Activated T-helper 1 cell treated with anti-CD3 and anti-CD28 coated beads, Interleukin-12 subunit alpha, Interleukin-12 subunit beta, Interleukin-2, Interleukin-4 antibody, amounts not matched to agents 30 ng/mL and 10 ng/mL and 1 ng/mL, durations not matched to agents 14 hours and 24 hours and 36 hours (primary cell): ENCODE measurements at regions of chr7 and their contacts with region 1.

Region 1: GRCh38 chr7:100015232-100016209 is at the start of gene ZKSCAN1:
- DNase-seq: peak; percentile 82
- H3K4me3 Mint-ChIP-seq: peak within 1 kb of the TSS; percentile 98
- H3K27ac Mint-ChIP-seq: peak within 1 kb of the TSS; percentile 92
- H3K4me1 Mint-ChIP-seq: peaks cover 55% of the 10 kb centered on the region
- H3K27me3 Mint-ChIP-seq: no peaks in the 10 kb centered on the region
- total RNA-seq, gene ZKSCAN1: 62.5 and 63.1 TPM in 2 replicates

Region 2: GRCh38 chr7:99438573-99439480 is 576.7 kb before region 1 on chr7 and contains the starts of genes CPSF4 and PTCD1:
- intact Hi-C with region 1: loop called (anchors 1 kb)
- DNase-seq: peak; percentile 91
- H3K4me3 Mint-ChIP-seq: peak within 1 kb of the TSS; percentile 98
- H3K27ac Mint-ChIP-seq: peak within 1 kb of the TSS; percentile 88
- H3K4me1 Mint-ChIP-seq: peaks cover 28% of the 10 kb centered on the region
- H3K27me3 Mint-ChIP-seq: no peaks in the 10 kb centered on the region
- total RNA-seq, gene CPSF4: 92.3 and 93.2 TPM in 2 replicates
- total RNA-seq, gene PTCD1: 13.7 and 16.0 TPM in 2 replicates

Region 3: GRCh38 chr7:99558306-99559174 is 457.0 kb before region 1 on chr7 and contains the start of gene ZNF655:
- intact Hi-C with region 1: loop called (anchors 5 kb)
- DNase-seq: peak; percentile 89
- H3K4me3 Mint-ChIP-seq: peak within 1 kb of the TSS; percentile 100
- H3K27ac Mint-ChIP-seq: peak within 1 kb of the TSS; percentile 98
- H3K4me1 Mint-ChIP-seq: peaks cover 48% of the 10 kb centered on the region
- H3K27me3 Mint-ChIP-seq: no peaks in the 10 kb centered on the region
- total RNA-seq, gene ZNF655: 77.9 and 79.9 TPM in 2 replicates

Region 4: GRCh38 chr7:99997545-99998137 is 17.9 kb before region 1 on chr7:
- intact Hi-C with region 1: loop called (anchors 1 kb)
- DNase-seq: peak; percentile 69
- H3K4me3 Mint-ChIP-seq: peak overlapping the region; percentile 77
- H3K27ac Mint-ChIP-seq: peak overlapping the region; percentile 89
- H3K4me1 Mint-ChIP-seq: peaks cover 10% of the 10 kb centered on the region
- H3K27me3 Mint-ChIP-seq: peaks cover 5% of the 10 kb centered on the region

Region 5: DNA sequence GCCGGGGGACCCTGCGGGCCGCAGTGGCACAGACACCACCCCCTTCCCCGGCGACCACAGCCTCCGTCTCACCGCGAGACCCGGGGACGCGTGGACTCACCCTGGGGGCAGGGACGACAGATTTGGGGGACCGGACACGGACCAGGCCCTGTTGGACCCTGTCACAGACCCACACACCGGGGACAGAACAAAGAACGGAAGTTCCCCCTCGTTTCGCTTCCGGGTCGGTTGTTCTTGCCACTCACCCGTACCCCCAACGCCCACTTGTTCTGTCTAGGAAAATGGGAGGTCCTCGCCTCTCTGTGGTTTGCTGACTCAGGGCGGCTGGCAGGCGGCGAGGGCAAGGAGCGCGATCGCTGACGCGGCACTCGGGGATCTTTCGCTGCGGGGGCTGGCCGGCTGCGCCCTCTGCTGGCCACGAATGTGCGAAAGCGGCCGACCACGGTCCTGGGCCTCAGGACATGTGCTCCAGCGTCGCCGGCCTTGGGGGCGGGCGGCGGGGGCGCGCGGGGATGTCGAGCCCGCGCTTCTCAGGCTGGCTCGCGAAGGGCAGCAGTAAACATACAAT is 66.1 kb after region 1 on chr7 and contains the start of gene ZNF3:
- intact Hi-C with region 1: loop called (anchors 1 kb)
- DNase-seq: peak; percentile 98
- H3K4me3 Mint-ChIP-seq: peak within 1 kb of the TSS; percentile 89
- H3K27ac Mint-ChIP-seq: peak within 1 kb of the TSS; percentile 92
- H3K4me1 Mint-ChIP-seq: peaks cover 31% of the 10 kb centered on the region
- H3K27me3 Mint-ChIP-seq: peaks cover 4% of the 10 kb centered on the region
- total RNA-seq, gene ZNF3: 24.6 and 26.1 TPM in 2 replicates

Region 6: GRCh38 chr7:100126931-100127865 is 111.7 kb after region 1 on chr7 and contains the start of gene MBLAC1:
- intact Hi-C with region 1: loop called (anchors 2 kb)
- DNase-seq: peak; percentile 85
- H3K4me3 Mint-ChIP-seq: peak within 1 kb of the TSS; percentile 94
- H3K27ac Mint-ChIP-seq: peak within 1 kb of the TSS; percentile 95
- H3K4me1 Mint-ChIP-seq: peaks cover 20% of the 10 kb centered on the region
- H3K27me3 Mint-ChIP-seq: no peaks in the 10 kb centered on the region
- total RNA-seq, gene MBLAC1: 4.1 and 5.5 TPM in 2 replicates